Activated T-helper 1 cell treated with anti-CD3 and anti-CD28 coated beads, Interleukin-12 subunit alpha, Interleukin-12 subunit beta, Interleukin-2, Interleukin-4 antibody, amounts not matched to agents 30 ng/mL and 10 ng/mL and 1 ng/mL, durations not matched to agents 14 hours and 24 hours and 36 hours (primary cell): ENCODE measurements at regions of chr7 and their contacts with region 1.

Region 1: GRCh38 chr7:99910976-99911375 is 8.4 kb downstream of the TRIM4 start:
- DNase-seq: no peak
- H3K4me3 Mint-ChIP-seq: no peak overlapping the region
- H3K27ac Mint-ChIP-seq: no peak overlapping the region
- H3K4me1 Mint-ChIP-seq: peaks cover 25% of the 10 kb centered on the region
- H3K27me3 Mint-ChIP-seq: no peaks in the 10 kb centered on the region

Region 2: DNA sequence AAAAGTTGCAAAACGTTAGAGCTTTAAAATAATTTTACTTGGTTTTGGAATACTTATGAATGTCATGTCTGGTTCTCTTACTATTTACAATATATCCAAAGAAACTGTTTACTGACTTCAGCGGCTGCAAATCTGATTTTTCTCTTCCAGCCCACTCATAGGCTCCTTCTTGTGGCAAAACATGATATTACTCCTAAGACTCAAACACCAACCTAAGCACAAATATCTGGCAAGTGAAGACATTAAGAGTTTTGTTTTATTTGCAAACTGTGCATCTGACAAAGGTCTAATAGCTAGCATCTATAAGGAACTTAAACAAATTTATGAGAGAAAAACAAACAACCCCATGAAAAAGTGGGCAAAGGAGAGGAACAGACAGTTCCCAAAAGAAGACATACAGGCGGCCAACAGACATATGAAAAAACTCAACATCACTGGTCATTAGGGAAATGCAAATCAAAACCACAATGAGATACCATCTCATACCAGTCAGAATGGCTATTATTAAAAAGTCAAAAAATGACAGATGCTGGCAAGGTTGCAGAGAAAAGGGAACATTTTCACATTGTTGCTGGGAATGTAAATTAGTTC is 38.8 kb after region 1 on chr7:
- intact Hi-C with region 1: loop called (anchors 1 kb)
- DNase-seq: no peak
- H3K4me3 Mint-ChIP-seq: no peak overlapping the region
- H3K27ac Mint-ChIP-seq: no peak overlapping the region
- H3K4me1 Mint-ChIP-seq: no peaks in the 10 kb centered on the region
- H3K27me3 Mint-ChIP-seq: peaks cover 5% of the 10 kb centered on the region

Region 3: GRCh38 chr7:99975782-99976521 is 65.0 kb after region 1 on chr7 and contains the start of gene AZGP1:
- intact Hi-C with region 1: loop called (anchors 2 kb)
- DNase-seq: no peak
- H3K4me3 Mint-ChIP-seq: no peak within 1 kb of the TSS
- H3K27ac Mint-ChIP-seq: no peak within 1 kb of the TSS
- H3K4me1 Mint-ChIP-seq: no peaks in the 10 kb centered on the region
- H3K27me3 Mint-ChIP-seq: peaks cover 4% of the 10 kb centered on the region
- total RNA-seq, gene AZGP1: not detected in 2 replicates

Region 4: GRCh38 chr7:99990460-99990852 is 79.5 kb after region 1 on chr7:
- intact Hi-C with region 1: loop called (anchors 1 kb)
- DNase-seq: no peak
- H3K4me3 Mint-ChIP-seq: no peak overlapping the region
- H3K27ac Mint-ChIP-seq: no peak overlapping the region
- H3K4me1 Mint-ChIP-seq: peaks cover 4% of the 10 kb centered on the region
- H3K27me3 Mint-ChIP-seq: peaks cover 9% of the 10 kb centered on the region

Region 5: GRCh38 chr7:100049441-100050311 is 138.7 kb after region 1 on chr7 and contains the start of gene ZSCAN21:
- intact Hi-C with region 1: loop called (anchors 2 kb)
- DNase-seq: peak; percentile 79
- H3K4me3 Mint-ChIP-seq: peak within 1 kb of the TSS; percentile 88
- H3K27ac Mint-ChIP-seq: peak within 1 kb of the TSS; percentile 92
- H3K4me1 Mint-ChIP-seq: peaks cover 13% of the 10 kb centered on the region
- H3K27me3 Mint-ChIP-seq: peaks cover 2% of the 10 kb centered on the region
- total RNA-seq, gene ZSCAN21: 6.8 and 9.8 TPM in 2 replicates